Dorsolateral prefrontal cortex (tissue), 120 donors: ENCODE measurements at regions of chr2 and their contacts with region 1.

Region 1: GRCh38 chr2:135531231-135532228 is at the start of gene R3HDM1:
- DNase-seq: peak; percentile 83 to 99 (median 98)
- H3K4me3 ChIP-seq: peak within 1 kb of the TSS; percentile 65 to 99 (median 90)
- H3K27ac ChIP-seq: peak within 1 kb of the TSS; percentile 81 to 99 (median 96)
- H3K27me3 ChIP-seq: no peaks in the 10 kb centered on the region
- CTCF ChIP-seq: peak in 16 of 56 donors; percentile 2 to 46 (median 16)
- total RNA-seq, gene R3HDM1: 78.4 to 359 (median 235) TPM

Region 2: GRCh38 chr2:134275058-134275862 is 1256.3 kb before region 1 on chr2:
- intact Hi-C with region 1: no loop called
- DNase-seq: no peak
- H3K4me3 ChIP-seq: no peak overlapping the region
- H3K27ac ChIP-seq: no peak overlapping the region
- H3K27me3 ChIP-seq: no peaks in the 10 kb centered on the region
- CTCF ChIP-seq: no peak

Region 3: DNA sequence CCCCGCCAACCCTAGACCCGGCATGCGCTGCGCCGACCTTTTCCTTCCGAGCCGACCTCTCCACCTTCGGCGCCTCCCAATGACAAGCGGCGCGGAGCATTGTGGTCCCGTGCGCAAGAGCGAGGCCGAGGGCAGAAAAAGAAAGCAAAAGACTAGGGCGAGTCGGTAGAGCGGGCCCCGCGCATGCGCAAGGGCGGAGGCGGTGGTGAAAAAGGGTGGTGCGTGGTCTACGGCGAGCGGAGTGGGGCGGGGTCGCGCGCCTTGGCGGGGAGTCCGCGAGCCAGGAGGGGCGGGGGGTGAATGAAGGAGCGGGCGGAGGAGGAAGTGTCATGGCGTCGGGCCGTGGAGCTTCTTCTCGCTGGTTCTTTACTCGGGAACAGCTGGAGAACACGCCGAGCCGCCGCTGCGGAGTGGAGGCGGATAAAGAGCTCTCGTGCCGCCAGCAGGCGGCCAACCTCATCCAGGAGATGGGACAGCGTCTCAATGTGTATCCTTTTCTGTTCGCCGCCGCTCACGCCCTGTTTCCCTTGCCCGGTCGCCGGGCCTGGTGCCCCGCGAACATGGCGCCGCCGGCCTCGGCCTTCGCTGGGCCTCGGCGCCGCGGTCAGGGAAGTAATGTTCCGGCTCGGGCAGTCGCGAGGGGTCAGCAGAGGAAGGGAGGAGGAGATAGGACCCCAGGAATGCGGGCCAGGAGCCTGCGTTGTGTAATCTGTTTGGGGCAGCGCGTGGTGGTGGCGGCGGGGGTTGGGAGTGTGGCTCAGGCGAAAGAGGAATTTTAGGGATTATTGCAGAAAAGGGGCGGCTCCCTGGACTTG is 612.8 kb before region 1 on chr2 and contains the start of gene CCNT2:
- intact Hi-C with region 1: loop called in 1 of 2 experiments (anchors 2 kb)
- DNase-seq: peak; percentile 97 to 100 (median 98)
- H3K4me3 ChIP-seq: peak within 1 kb of the TSS; percentile 60 to 99 (median 93)
- H3K27ac ChIP-seq: peak within 1 kb of the TSS; percentile 85 to 99 (median 97)
- H3K27me3 ChIP-seq: no peaks in the 10 kb centered on the region
- CTCF ChIP-seq: peak in 20 of 56 donors; percentile 7 to 38 (median 22)
- total RNA-seq, gene CCNT2: 37.5 to 74.9 (median 55.2) TPM

Region 4: GRCh38 chr2:135052042-135052876 is 479.3 kb before region 1 on chr2 and contains the start of gene RAB3GAP1:
- intact Hi-C with region 1: loop called (anchors 2 to 5 kb)
- DNase-seq: peak; percentile 52 to 74 (median 67)
- H3K4me3 ChIP-seq: peak within 1 kb of the TSS; percentile 61 to 99 (median 88)
- H3K27ac ChIP-seq: peak within 1 kb of the TSS; percentile 23 to 96 (median 89)
- H3K27me3 ChIP-seq: no peaks in the 10 kb centered on the region
- CTCF ChIP-seq: peak in 6 of 56 donors; percentile 9 to 37 (median 26)
- total RNA-seq, gene RAB3GAP1: 44.9 to 101 (median 76.7) TPM

Region 5: DNA sequence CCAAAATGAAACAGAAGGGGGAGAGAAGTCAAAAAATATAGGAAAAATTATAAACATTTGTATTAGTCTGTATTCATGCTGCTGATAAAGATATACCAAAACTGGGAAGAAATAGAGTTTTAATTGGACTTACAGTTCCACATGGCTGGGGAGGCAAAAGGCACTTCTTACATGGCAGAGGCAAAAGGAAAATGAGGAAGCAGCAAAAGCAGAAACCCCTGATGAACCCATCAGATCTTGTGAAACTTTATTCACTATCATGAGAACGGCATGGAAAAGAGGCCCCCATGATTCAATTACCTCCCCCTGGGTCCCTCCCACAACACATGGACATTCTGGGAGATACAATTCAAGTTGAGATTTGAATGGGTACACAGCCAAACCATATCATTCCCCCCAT is 79.6 kb before region 1 on chr2:
- intact Hi-C with region 1: no loop called
- DNase-seq: no peak
- H3K4me3 ChIP-seq: no peak overlapping the region
- H3K27ac ChIP-seq: no peak overlapping the region
- H3K27me3 ChIP-seq: no peaks in the 10 kb centered on the region
- CTCF ChIP-seq: no peak

Region 6: GRCh38 chr2:135473567-135473966 is 58.0 kb before region 1 on chr2:
- intact Hi-C with region 1: no loop called
- DNase-seq: no peak
- H3K4me3 ChIP-seq: no peak overlapping the region
- H3K27ac ChIP-seq: peak overlapping the region in 1 of 59 donors; percentile 21
- H3K27me3 ChIP-seq: no peaks in the 10 kb centered on the region
- CTCF ChIP-seq: peak in 44 of 56 donors; percentile 17 to 59 (median 37)

Region 7: DNA sequence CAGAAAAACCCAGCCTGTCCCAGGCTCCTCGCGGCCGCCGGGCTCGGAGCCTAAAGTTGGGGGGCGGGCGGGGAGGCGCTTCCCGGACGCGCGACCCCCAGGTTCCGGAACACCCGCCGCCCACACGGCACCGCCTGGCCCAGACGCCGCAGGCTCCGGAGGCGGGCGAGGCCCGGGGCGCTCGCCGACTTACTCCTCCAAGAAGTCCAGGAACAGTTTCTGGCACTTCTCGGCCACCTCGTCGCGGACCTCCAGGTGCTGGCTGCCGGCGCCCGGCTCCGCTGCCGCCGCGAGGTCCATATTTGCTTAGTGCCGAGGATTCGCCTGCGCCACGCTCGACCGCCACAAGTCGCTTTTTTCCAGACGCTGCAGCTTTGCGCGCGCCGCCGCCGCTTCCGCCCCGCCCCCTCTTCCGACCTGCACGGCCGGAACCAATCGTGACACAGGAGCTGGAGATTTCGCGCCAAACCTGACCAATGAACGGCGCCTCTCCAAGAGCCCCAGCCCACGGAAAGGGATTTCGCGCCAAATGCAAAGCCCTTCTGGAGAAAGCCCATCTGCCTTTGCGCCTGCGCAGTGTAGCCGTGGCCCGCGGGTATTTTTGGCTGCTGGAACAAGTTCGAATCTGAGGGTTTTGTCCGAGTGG is 344.7 kb after region 1 on chr2 and contains the start of gene MCM6:
- intact Hi-C with region 1: loop called in 1 of 2 experiments (anchors 5 kb)
- DNase-seq: peak; percentile 90 to 98 (median 96)
- H3K4me3 ChIP-seq: peak within 1 kb of the TSS; percentile 63 to 91 (median 81)
- H3K27ac ChIP-seq: peak within 1 kb of the TSS in 53 of 59 donors; percentile 13 to 89 (median 71)
- H3K27me3 ChIP-seq: no peaks in the 10 kb centered on the region
- CTCF ChIP-seq: peak in 35 of 56 donors; percentile 11 to 58 (median 33)
- total RNA-seq, gene MCM6: 6.7 to 22.6 (median 12.2) TPM